ENCODE measurements at regions of chr7 and their contacts with region 1.

Region 1: GRCh38 chr7:151304856-151305255 is 36.8 kb upstream of the NUB1 start:
- DNase-seq: no peak
- ATAC-seq: no peak
- H3K4me3 Mint-ChIP-seq: no peak overlapping the region
- H3K27ac Mint-ChIP-seq: no peak overlapping the region
- H3K4me1 Mint-ChIP-seq: peaks cover 5% of the 10 kb centered on the region
- H3K27me3 Mint-ChIP-seq: peaks cover 34% of the 10 kb centered on the region
- CTCF ChIP-seq: no peak

Region 2: GRCh38 chr7:150778738-150779301 is 526.0 kb before region 1 on chr7:
- CTCF ChIA-PET with region 1: no interaction called
- POLR2A ChIA-PET with region 1: no interaction called
- intact Hi-C with region 1: loop called (anchors 2 kb)
- DNase-seq: peak; percentile 37
- ATAC-seq: peak; percentile 49
- H3K4me3 Mint-ChIP-seq: no peak overlapping the region
- H3K27ac Mint-ChIP-seq: no peak overlapping the region
- H3K4me1 Mint-ChIP-seq: no peaks in the 10 kb centered on the region
- H3K27me3 Mint-ChIP-seq: peaks cover 18% of the 10 kb centered on the region
- CTCF ChIP-seq: peak; percentile 99

Region 3: DNA sequence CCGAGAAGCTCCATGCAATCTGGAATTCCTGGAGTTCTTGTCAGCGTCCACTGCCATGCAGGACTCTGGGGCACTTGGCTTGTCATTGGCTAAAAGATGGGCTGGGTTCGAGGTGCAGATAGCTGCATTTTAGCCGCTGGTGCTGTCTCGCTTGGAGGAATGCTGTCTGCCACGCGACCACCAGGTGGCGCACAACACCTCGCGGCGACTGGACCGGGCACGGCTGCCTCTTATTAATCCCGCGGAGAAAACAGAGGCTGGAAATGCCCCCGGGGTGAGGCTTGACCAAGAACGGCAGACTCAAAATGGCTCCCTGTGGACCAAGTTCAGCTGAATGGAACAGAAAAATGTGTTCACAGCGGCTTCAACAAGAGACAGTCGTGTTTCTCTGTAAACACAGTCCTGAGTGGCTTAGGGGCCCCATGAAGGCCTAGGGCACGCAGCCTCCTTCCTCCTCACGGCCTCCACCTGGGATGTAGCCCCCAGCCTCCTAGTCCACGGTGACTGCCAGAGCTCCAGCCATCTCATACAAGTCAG is 406.3 kb before region 1 on chr7:
- CTCF ChIA-PET with region 1: no interaction called
- POLR2A ChIA-PET with region 1: no interaction called
- intact Hi-C with region 1: loop called (anchors 5 kb)
- DNase-seq: peak; percentile 69
- ATAC-seq: peak; percentile 78
- H3K4me3 Mint-ChIP-seq: peak overlapping the region; percentile 24
- H3K27ac Mint-ChIP-seq: no peak overlapping the region
- H3K4me1 Mint-ChIP-seq: peaks cover 33% of the 10 kb centered on the region
- H3K27me3 Mint-ChIP-seq: peaks cover 38% of the 10 kb centered on the region
- CTCF ChIP-seq: peak; percentile 92

Region 4: DNA sequence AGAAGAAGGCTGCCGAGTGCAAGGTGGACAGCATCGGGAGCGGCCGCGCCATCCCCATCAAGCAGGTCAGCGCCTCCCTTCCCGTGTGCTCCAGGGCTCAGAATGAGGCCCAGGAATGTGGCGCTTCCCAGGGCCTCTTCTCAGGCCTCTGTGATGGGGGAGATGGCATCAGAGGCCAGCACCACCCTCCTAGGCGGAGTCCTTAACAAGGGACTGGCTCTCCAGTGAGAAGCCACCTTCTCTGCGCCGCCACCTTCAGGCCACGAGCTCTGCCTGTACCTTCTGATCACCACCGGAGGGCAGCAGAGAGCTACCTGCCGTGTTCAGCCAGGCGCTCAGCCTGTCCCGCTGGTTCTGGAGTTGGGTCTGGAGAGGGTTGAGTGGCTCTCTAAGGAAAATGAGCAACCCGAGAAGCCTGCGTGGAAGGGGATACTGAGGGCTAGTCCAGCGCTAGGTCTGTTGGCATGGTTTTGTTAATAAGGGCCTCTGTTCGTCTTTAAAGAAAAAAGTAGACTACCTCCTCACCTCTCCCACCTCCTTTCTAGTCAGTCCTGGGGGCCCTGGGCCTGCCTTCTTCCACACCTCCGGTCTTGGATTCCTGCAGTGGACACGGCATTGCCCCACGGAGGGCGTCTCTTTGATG is 180.9 kb before region 1 on chr7:
- CTCF ChIA-PET with region 1: interaction called, 16 read pairs
- POLR2A ChIA-PET with region 1: interaction called, 5 read pairs
- intact Hi-C with region 1: loop called (anchors 1 kb)
- DNase-seq: peak; percentile 67
- ATAC-seq: peak; percentile 98
- H3K4me3 Mint-ChIP-seq: no peak overlapping the region
- H3K27ac Mint-ChIP-seq: no peak overlapping the region
- H3K4me1 Mint-ChIP-seq: peaks cover 3% of the 10 kb centered on the region
- H3K27me3 Mint-ChIP-seq: peaks cover 4% of the 10 kb centered on the region
- CTCF ChIP-seq: peak; percentile 17

Region 5: GRCh38 chr7:151172273-151173141 is 132.3 kb before region 1 on chr7:
- CTCF ChIA-PET with region 1: no interaction called
- POLR2A ChIA-PET with region 1: no interaction called
- intact Hi-C with region 1: loop called (anchors 1 kb)
- DNase-seq: peak; percentile 72
- ATAC-seq: peak; percentile 86
- H3K4me3 Mint-ChIP-seq: no peak overlapping the region
- H3K27ac Mint-ChIP-seq: no peak overlapping the region
- H3K4me1 Mint-ChIP-seq: peaks cover 6% of the 10 kb centered on the region
- H3K27me3 Mint-ChIP-seq: peaks cover 56% of the 10 kb centered on the region
- CTCF ChIP-seq: peak; percentile 100

Region 6: GRCh38 chr7:151226875-151227782 is 77.7 kb before region 1 on chr7 and contains the start of gene ABCF2:
- CTCF ChIA-PET with region 1: no interaction called
- POLR2A ChIA-PET with region 1: no interaction called
- intact Hi-C with region 1: loop called (anchors 5 kb)
- DNase-seq: peak; percentile 97
- ATAC-seq: peak; percentile 99
- H3K4me3 Mint-ChIP-seq: peak within 1 kb of the TSS; percentile 99
- H3K27ac Mint-ChIP-seq: peak within 1 kb of the TSS; percentile 91
- H3K4me1 Mint-ChIP-seq: peaks cover 41% of the 10 kb centered on the region
- H3K27me3 Mint-ChIP-seq: no peaks in the 10 kb centered on the region
- CTCF ChIP-seq: no peak
- total RNA-seq, gene ABCF2: 47.3 and 52.4 TPM in 2 replicates

Measured in activated B cell treated with CpG ODN at 0.5 μM for 24 hours (primary cell).